ENCODE measurements at regions of chr19 and their contacts with region 1.

Region 1: DNA sequence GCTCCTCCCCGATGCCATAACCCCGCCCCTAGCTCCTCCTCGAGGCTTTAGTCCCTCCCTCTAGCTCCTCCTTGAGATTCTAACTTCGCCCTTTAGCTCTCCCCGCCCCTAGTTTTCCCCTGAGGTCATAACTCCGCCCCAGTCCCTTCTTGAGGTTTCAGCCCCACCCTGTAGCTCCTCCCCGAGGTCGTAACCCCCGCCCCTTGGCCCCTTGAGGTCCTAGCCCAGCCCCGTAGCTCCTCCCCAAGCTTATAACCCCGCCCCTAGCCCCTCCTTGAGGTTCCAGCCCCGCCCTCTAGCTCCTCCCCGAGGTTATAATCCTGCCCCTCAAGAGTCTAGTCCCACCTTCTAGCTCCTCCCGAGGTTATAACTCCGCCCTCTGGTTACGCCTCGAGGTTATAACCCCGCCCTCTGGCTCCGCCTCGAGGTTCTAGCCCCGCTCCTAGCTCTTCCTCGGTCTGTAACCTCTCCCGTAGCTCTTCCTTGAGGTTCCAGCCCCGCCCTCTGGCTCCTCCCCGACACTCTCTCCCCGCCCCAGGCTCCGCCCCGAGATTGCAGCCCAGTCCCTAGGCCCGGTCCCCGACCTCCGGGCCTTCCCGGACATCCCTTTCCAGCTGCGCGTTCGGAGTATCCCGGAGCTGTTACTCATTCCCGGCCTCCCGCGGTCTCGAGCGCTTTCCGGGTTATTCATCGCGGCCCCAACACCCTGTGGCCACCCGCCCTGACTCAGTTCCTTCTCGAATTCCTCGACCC is 1.4 kb downstream of the PLAUR start:
- DNase-seq: peak; percentile 82 to 98 (median 95)
- ATAC-seq: peak; percentile 90
- H3K4me3 ChIP-seq: peak overlapping the region; percentile 88
- H3K4me3 Mint-ChIP-seq: peak overlapping the region; percentile 84 to 93 (median 90)
- H3K27ac ChIP-seq: peak overlapping the region; percentile 58
- H3K27ac Mint-ChIP-seq: peak overlapping the region; percentile 71 to 91 (median 86)
- H3K4me1 ChIP-seq: peaks cover 16 to 27% of the 10 kb centered on the region in 2 donors
- H3K4me1 Mint-ChIP-seq: peaks cover 37 to 55% (median 45%) of the 10 kb centered on the region in 7 donors
- H3K27me3 ChIP-seq: no peaks in the 10 kb centered on the region
- H3K27me3 Mint-ChIP-seq: peaks cover 0 to 8% (median 0%) of the 10 kb centered on the region in 5 donors

Region 2: GRCh38 chr19:43463381-43464136 is 205.0 kb before region 1 on chr19:
- CTCF ChIA-PET with region 1: no interaction called
- POLR2A ChIA-PET with region 1: no interaction called
- intact Hi-C with region 1: loop called (anchors 1 kb)
- DNase-seq: peak; percentile 94 to 100 (median 99)
- ATAC-seq: peak; percentile 92
- H3K4me3 ChIP-seq: peak overlapping the region; percentile 92
- H3K4me3 Mint-ChIP-seq: peak overlapping the region; percentile 87 to 99 (median 94)
- H3K27ac ChIP-seq: peak overlapping the region; percentile 92
- H3K27ac Mint-ChIP-seq: peak overlapping the region; percentile 89 to 100 (median 99)
- H3K4me1 ChIP-seq: peaks cover 8 to 19% of the 10 kb centered on the region in 2 donors
- H3K4me1 Mint-ChIP-seq: peaks cover 24 to 67% (median 51%) of the 10 kb centered on the region in 7 donors
- H3K27me3 ChIP-seq: no peaks in the 10 kb centered on the region
- H3K27me3 Mint-ChIP-seq: peaks cover 0 to 2% (median 0%) of the 10 kb centered on the region in 5 donors

Region 3: GRCh38 chr19:43532962-43533545 is 135.5 kb before region 1 on chr19 and contains the start of gene ZNF575:
- CTCF ChIA-PET with region 1: no interaction called
- POLR2A ChIA-PET with region 1: interaction called, 5 read pairs
- intact Hi-C with region 1: loop called (anchors 2 to 5 kb)
- DNase-seq: peak; percentile 61 to 91 (median 87)
- ATAC-seq: peak; percentile 64
- H3K4me3 ChIP-seq: peak within 1 kb of the TSS; percentile 98
- H3K4me3 Mint-ChIP-seq: peak within 1 kb of the TSS; percentile 88 to 98 (median 95)
- H3K27ac ChIP-seq: peak within 1 kb of the TSS; percentile 68
- H3K27ac Mint-ChIP-seq: peak within 1 kb of the TSS; percentile 90 to 98 (median 95)
- H3K4me1 ChIP-seq: peaks cover 12 to 14% of the 10 kb centered on the region in 2 donors
- H3K4me1 Mint-ChIP-seq: peaks cover 5 to 27% (median 18%) of the 10 kb centered on the region in 7 donors
- H3K27me3 ChIP-seq: no peaks in the 10 kb centered on the region
- H3K27me3 Mint-ChIP-seq: no peaks in the 10 kb centered on the region
- total RNA-seq, gene ZNF575: 4.5 to 10.7 (median 5.6) TPM

Region 4: GRCh38 chr19:43639519-43640423 is 28.8 kb before region 1 on chr19 and contains the start of gene CADM4:
- CTCF ChIA-PET with region 1: no interaction called
- POLR2A ChIA-PET with region 1: interaction called, 3 read pairs
- intact Hi-C with region 1: loop called in 1 of 2 experiments (anchors 1 kb)
- DNase-seq: peak; percentile 42 to 70 (median 57)
- ATAC-seq: peak; percentile 91
- H3K4me3 ChIP-seq: peak within 1 kb of the TSS; percentile 61
- H3K4me3 Mint-ChIP-seq: peak within 1 kb of the TSS; percentile 76 to 93 (median 84)
- H3K27ac ChIP-seq: peak within 1 kb of the TSS; percentile 49
- H3K27ac Mint-ChIP-seq: peak within 1 kb of the TSS in 8 of 9 donors; percentile 2 to 92 (median 48)
- H3K4me1 ChIP-seq: peaks cover 0 to 6% of the 10 kb centered on the region in 2 donors
- H3K4me1 Mint-ChIP-seq: peaks cover 12 to 28% (median 15%) of the 10 kb centered on the region in 7 donors
- H3K27me3 ChIP-seq: peaks cover 4 to 8% of the 10 kb centered on the region in 2 donors
- H3K27me3 Mint-ChIP-seq: peaks cover 13 to 52% (median 30%) of the 10 kb centered on the region in 5 donors
- total RNA-seq, gene CADM4: 0.35 to 0.97 (median 0.51) TPM

Region 5: GRCh38 chr19:43754503-43755255 is 86.1 kb after region 1 on chr19 and contains the start of gene SMG9:
- CTCF ChIA-PET with region 1: interaction called, 3 read pairs
- POLR2A ChIA-PET with region 1: interaction called, 10 read pairs
- intact Hi-C with region 1: loop called (anchors 1 kb)
- DNase-seq: peak; percentile 98 to 100 (median 99)
- ATAC-seq: peak; percentile 92
- H3K4me3 ChIP-seq: peak within 1 kb of the TSS; percentile 95
- H3K4me3 Mint-ChIP-seq: peak within 1 kb of the TSS; percentile 94 to 99 (median 97)
- H3K27ac ChIP-seq: peak within 1 kb of the TSS; percentile 85
- H3K27ac Mint-ChIP-seq: peak within 1 kb of the TSS; percentile 96 to 100 (median 98)
- H3K4me1 ChIP-seq: peaks cover 20 to 27% of the 10 kb centered on the region in 2 donors
- H3K4me1 Mint-ChIP-seq: peaks cover 5 to 62% (median 45%) of the 10 kb centered on the region in 7 donors
- H3K27me3 ChIP-seq: no peaks in the 10 kb centered on the region
- H3K27me3 Mint-ChIP-seq: peaks cover 0 to 6% (median 0%) of the 10 kb centered on the region in 5 donors
- total RNA-seq, gene SMG9: 48.5 to 75.9 (median 53.9) TPM

Region 6: DNA sequence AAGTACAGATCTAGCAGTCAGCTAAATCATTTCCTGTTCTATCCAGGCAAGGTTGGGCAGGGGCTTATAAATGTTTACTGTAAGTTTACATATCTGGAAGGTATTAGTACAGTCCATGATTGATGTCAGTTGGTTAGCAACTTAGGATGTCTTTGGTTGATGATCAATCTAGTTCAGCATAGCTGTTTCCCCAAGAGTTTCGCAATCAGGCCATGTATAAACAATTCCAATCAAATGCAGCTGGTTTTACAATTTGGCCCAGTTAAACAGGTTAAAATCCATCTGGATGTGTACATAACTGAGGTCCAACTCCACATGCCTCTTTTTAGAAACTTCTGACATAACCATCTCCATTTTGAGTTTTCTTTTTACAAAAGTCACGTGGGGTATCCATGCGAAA is 289.3 kb after region 1 on chr19:
- CTCF ChIA-PET with region 1: no interaction called
- POLR2A ChIA-PET with region 1: no interaction called
- intact Hi-C with region 1: no loop called
- DNase-seq: no peak
- ATAC-seq: no peak
- H3K4me3 ChIP-seq: no peak overlapping the region
- H3K4me3 Mint-ChIP-seq: no peak overlapping the region
- H3K27ac ChIP-seq: no peak overlapping the region
- H3K27ac Mint-ChIP-seq: no peak overlapping the region
- H3K4me1 ChIP-seq: no peaks in the 10 kb centered on the region
- H3K4me1 Mint-ChIP-seq: no peaks in the 10 kb centered on the region
- H3K27me3 ChIP-seq: no peaks in the 10 kb centered on the region
- H3K27me3 Mint-ChIP-seq: peaks cover 0 to 18% (median 5%) of the 10 kb centered on the region in 5 donors

Region 7: GRCh38 chr19:44770550-44771257 is 1102.1 kb after region 1 on chr19:
- CTCF ChIA-PET with region 1: no interaction called
- POLR2A ChIA-PET with region 1: no interaction called
- intact Hi-C with region 1: loop called in 1 of 2 experiments (anchors 1 kb)
- DNase-seq: peak; percentile 88 to 96 (median 94)
- ATAC-seq: peak; percentile 100
- H3K4me3 ChIP-seq: no peak overlapping the region
- H3K4me3 Mint-ChIP-seq: peak overlapping the region; percentile 45 to 83 (median 72)
- H3K27ac ChIP-seq: no peak overlapping the region
- H3K27ac Mint-ChIP-seq: peak overlapping the region; percentile 69 to 95 (median 86)
- H3K4me1 ChIP-seq: peaks cover 5 to 9% of the 10 kb centered on the region in 2 donors
- H3K4me1 Mint-ChIP-seq: peaks cover 0 to 37% (median 24%) of the 10 kb centered on the region in 7 donors
- H3K27me3 ChIP-seq: no peaks in the 10 kb centered on the region
- H3K27me3 Mint-ChIP-seq: peaks cover 0 to 3% (median 0%) of the 10 kb centered on the region in 5 donors

Measured in naive thymus-derived CD4-positive, alpha-beta T cell (primary cell).